Heart right ventricle (tissue), 16 donors: ENCODE measurements at regions of chr12 and their contacts with region 1.

Region 1: GRCh38 chr12:85920324-85920947 is 46.3 kb downstream of the NTS start:
- DNase-seq: no peak
- ATAC-seq: no peak
- H3K4me3 ChIP-seq: no peak overlapping the region
- H3K27ac ChIP-seq: no peak overlapping the region
- H3K4me1 ChIP-seq: no peaks in the 10 kb centered on the region
- H3K27me3 ChIP-seq: no peaks in the 10 kb centered on the region
- CTCF ChIP-seq: peak; percentile 36 to 79 (median 66)

Region 2: GRCh38 chr12:84874125-84874824 is 1046.2 kb before region 1 on chr12:
- intact Hi-C with region 1: loop called in 1 of 10 experiments (anchors 10 kb)
- DNase-seq: no peak
- ATAC-seq: peak in 2 of 8 donors; percentile 16 to 48
- H3K4me3 ChIP-seq: no peak overlapping the region
- H3K27ac ChIP-seq: no peak overlapping the region
- H3K4me1 ChIP-seq: no peaks in the 10 kb centered on the region
- H3K27me3 ChIP-seq: peaks cover 0 to 7% (median 0%) of the 10 kb centered on the region in 7 donors
- CTCF ChIP-seq: peak; percentile 46 to 83 (median 76)

Region 3: DNA sequence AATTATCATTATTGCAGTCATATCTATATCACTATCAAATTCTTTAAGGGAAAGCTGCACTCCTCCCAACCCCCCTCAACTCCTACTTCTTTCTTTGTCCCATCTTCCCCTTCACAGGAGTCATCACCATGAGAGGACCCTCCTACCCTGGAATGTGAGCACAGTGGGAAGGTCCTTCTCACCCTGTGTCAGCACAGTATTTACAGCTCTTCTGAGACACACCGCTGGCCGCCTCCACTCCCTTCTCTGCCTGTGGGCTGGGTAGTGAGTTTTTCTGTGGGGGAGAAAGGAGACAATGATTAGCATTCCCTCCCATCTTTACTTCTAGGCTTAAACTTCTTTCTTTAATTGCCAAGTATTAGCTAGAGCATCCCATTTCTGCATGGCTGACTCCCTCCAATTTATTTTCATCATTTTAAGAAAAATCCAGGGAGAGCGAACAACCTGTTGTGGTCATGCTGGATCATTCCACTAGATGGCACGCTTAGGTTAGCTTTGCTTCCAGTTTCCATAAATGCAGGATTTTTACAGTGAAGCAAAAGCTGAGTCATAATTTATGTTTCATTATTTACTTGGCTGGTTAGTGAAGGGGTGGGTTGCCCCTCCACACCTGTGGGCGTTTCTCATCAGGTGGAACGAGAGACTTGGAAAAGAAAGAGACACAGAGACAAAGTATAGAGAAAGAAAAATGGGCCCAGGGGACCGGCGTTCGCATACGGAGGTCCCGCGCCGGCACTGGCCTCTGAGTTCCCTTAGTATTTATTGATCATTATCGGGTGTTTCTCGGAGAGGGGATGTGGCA is 451.9 kb before region 1 on chr12:
- intact Hi-C with region 1: loop called in 9 of 10 experiments (anchors 2 to 10 kb)
- DNase-seq: peak in 1 of 2 donors; percentile 12
- ATAC-seq: peak in 5 of 8 donors; percentile 25 to 62 (median 48)
- H3K4me3 ChIP-seq: peak overlapping the region in 9 of 10 donors; percentile 22 to 58 (median 46)
- H3K27ac ChIP-seq: no peak overlapping the region
- H3K4me1 ChIP-seq: peaks cover 0 to 8% (median 4%) of the 10 kb centered on the region in 9 donors
- H3K27me3 ChIP-seq: peaks cover 0 to 37% (median 11%) of the 10 kb centered on the region in 7 donors
- CTCF ChIP-seq: peak; percentile 48 to 85 (median 75)

Region 4: GRCh38 chr12:85476756-85477155 is 443.7 kb before region 1 on chr12:
- intact Hi-C with region 1: loop called in 4 of 10 experiments (anchors 5 to 10 kb)
- DNase-seq: no peak
- ATAC-seq: no peak
- H3K4me3 ChIP-seq: no peak overlapping the region
- H3K27ac ChIP-seq: no peak overlapping the region
- H3K4me1 ChIP-seq: no peaks in the 10 kb centered on the region
- H3K27me3 ChIP-seq: peaks cover 0 to 5% (median 0%) of the 10 kb centered on the region in 7 donors
- CTCF ChIP-seq: no peak

Region 5: GRCh38 chr12:86551146-86551571 is 630.7 kb after region 1 on chr12:
- intact Hi-C with region 1: no loop called
- DNase-seq: peak in 1 of 2 donors; percentile 49
- ATAC-seq: peak in 3 of 8 donors; percentile 47 to 74 (median 47)
- H3K4me3 ChIP-seq: no peak overlapping the region
- H3K27ac ChIP-seq: no peak overlapping the region
- H3K4me1 ChIP-seq: no peaks in the 10 kb centered on the region
- H3K27me3 ChIP-seq: no peaks in the 10 kb centered on the region
- CTCF ChIP-seq: no peak

Region 6: GRCh38 chr12:86914716-86915115 is 994.3 kb after region 1 on chr12:
- intact Hi-C with region 1: loop called in 1 of 10 experiments (anchors 10 kb)
- DNase-seq: no peak
- ATAC-seq: no peak
- H3K4me3 ChIP-seq: no peak overlapping the region
- H3K27ac ChIP-seq: no peak overlapping the region
- H3K4me1 ChIP-seq: no peaks in the 10 kb centered on the region
- H3K27me3 ChIP-seq: no peaks in the 10 kb centered on the region
- CTCF ChIP-seq: peak in 7 of 9 donors; percentile 21 to 49 (median 37)